Caco-2 (cell line): ENCODE measurements at regions of chr9 and their contacts with region 1.

Region 1: DNA sequence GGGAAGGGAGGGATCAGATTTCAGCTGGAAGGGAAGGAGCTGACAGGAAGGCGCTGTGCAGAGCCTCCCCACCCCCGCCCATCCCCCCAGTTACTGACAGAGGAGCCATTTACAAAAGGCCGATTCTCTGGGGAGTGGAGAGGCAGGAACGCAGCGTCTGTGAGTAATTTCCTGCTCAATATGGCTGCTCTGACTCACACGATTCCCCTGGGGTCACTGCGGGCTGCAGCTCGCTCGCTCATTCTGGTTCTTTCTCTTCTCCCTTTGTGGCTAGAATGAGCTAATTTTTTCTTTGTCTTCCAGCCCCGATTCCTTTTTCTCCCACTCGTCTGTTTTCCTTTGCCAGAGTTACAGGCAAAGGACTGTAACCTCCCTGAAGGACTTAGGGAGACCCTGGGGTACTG is 28.8 kb downstream of the PTPA start:
- DNase-seq: peak; percentile 41 to 85
- H3K4me3 ChIP-seq: peak overlapping the region; percentile 21
- H3K4me3 Mint-ChIP-seq: peak overlapping the region; percentile 64
- H3K27ac Mint-ChIP-seq: peak overlapping the region; percentile 95
- H3K4me1 ChIP-seq: peaks cover 51% of the 10 kb centered on the region
- H3K4me1 Mint-ChIP-seq: peaks cover 29% of the 10 kb centered on the region
- H3K27me3 ChIP-seq: no peaks in the 10 kb centered on the region
- H3K27me3 Mint-ChIP-seq: no peaks in the 10 kb centered on the region
- CTCF ChIP-seq: peak in 1 of 2 experiments; percentile 0

Region 2: GRCh38 chr9:129108083-129108804 is 31.8 kb before region 1 on chr9:
- CTCF ChIA-PET with region 1: no interaction called
- POLR2A ChIA-PET with region 1: no interaction called
- intact Hi-C with region 1: no loop called
- DNase-seq: no peak
- H3K4me3 ChIP-seq: no peak overlapping the region
- H3K4me3 Mint-ChIP-seq: peak overlapping the region; percentile 27
- H3K27ac Mint-ChIP-seq: no peak overlapping the region
- H3K4me1 ChIP-seq: peaks cover 10% of the 10 kb centered on the region
- H3K4me1 Mint-ChIP-seq: peaks cover 22% of the 10 kb centered on the region
- H3K27me3 ChIP-seq: no peaks in the 10 kb centered on the region
- H3K27me3 Mint-ChIP-seq: no peaks in the 10 kb centered on the region
- CTCF ChIP-seq: no peak

Region 3: GRCh38 chr9:129166623-129167557 is 26.9 kb after region 1 on chr9:
- CTCF ChIA-PET with region 1: interaction called, 18 read pairs
- POLR2A ChIA-PET with region 1: no interaction called
- intact Hi-C with region 1: loop called (anchors 2 kb)
- DNase-seq: peak; percentile 87 to 89
- H3K4me3 ChIP-seq: peak overlapping the region; percentile 15
- H3K4me3 Mint-ChIP-seq: peak overlapping the region; percentile 66
- H3K27ac Mint-ChIP-seq: peak overlapping the region; percentile 71
- H3K4me1 ChIP-seq: peaks cover 18% of the 10 kb centered on the region
- H3K4me1 Mint-ChIP-seq: peaks cover 32% of the 10 kb centered on the region
- H3K27me3 ChIP-seq: no peaks in the 10 kb centered on the region
- H3K27me3 Mint-ChIP-seq: no peaks in the 10 kb centered on the region
- CTCF ChIP-seq: no peak